OCI-LY7 (cell line): ENCODE measurements at regions of chr12 and their contacts with region 1.

Region 1: DNA sequence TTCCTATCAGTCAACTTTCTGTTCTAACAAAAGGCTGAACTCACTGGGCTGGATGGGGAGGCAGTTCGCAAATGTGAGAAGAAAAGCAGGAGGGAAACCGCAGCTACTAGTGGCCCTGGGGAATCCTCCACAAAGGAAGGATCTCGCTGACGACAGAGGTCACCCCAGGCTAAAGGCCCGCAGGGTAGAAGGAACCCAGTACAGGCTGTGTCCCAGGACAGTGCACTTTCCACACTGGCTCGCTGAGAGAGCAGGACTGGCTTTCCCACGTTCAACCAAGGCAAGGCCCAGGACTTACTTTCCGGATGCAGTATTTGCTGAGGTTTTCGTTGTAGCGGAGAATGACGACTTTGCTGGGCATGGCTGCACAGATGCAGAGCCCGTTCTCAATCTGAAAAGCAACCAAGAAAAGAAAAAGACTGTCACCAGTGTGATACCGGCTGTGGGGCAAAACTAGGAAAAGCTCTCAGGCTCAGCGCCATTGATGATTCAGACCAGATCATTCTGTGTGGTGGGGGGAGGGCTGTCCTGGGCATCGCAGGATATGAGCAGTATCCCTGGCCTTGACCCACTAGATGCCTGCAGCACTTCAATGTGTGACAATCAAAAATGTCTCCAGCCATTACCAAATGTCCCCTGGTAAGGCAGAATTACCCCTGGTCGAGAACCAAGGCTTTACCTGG is 36.3 kb downstream of the PRKAB1 start:
- DNase-seq: no peak
- H3K4me3 ChIP-seq: no peak overlapping the region
- H3K27ac ChIP-seq: no peak overlapping the region
- H3K4me1 ChIP-seq: no peaks in the 10 kb centered on the region
- CTCF ChIP-seq: no peak

Region 2: GRCh38 chr12:119198421-119198820 is 505.8 kb before region 1 on chr12:
- CTCF ChIA-PET with region 1: no interaction called
- POLR2A ChIA-PET with region 1: no interaction called
- intact Hi-C with region 1: no loop called
- DNase-seq: no peak
- H3K4me3 ChIP-seq: no peak overlapping the region
- H3K27ac ChIP-seq: no peak overlapping the region
- H3K4me1 ChIP-seq: no peaks in the 10 kb centered on the region
- CTCF ChIP-seq: no peak

Region 3: GRCh38 chr12:119902084-119902509 is 197.9 kb after region 1 on chr12:
- CTCF ChIA-PET with region 1: no interaction called
- POLR2A ChIA-PET with region 1: no interaction called
- intact Hi-C with region 1: loop called (anchors 5 kb)
- DNase-seq: peak; percentile 81
- H3K4me3 ChIP-seq: no peak overlapping the region
- H3K27ac ChIP-seq: no peak overlapping the region
- H3K4me1 ChIP-seq: no peaks in the 10 kb centered on the region
- CTCF ChIP-seq: peak; percentile 93